Common myeloid progenitor, CD34-positive (primary cell): ENCODE measurements at regions of chr2 and their contacts with region 1.

Region 1: DNA sequence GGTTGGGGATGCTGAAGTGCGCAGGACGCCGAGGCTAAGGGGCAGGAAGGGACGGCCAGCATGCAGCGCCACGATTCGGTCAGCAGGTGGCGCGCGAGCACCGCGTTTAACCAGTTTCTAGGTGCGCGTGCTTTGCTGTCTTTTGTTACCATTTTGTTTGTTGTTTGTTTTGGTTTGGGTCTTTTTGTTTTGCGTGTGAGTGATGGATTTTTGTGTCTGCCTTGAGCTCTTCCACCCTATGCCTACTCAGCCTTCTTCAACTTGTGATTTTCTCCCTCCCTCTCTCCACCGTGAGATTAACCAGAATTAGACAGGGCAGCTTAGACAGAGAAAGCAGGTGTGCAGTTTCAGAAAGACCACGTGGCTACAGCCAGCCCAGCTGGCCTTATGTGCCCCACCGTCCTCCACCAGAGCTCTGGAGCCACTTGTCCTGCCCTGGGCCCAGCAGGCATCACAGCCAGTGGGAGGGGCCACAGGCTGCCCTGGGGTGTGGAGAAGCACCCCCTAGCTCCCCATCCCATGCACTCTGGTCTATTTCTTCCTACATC is 180.2 kb downstream of the RNF144A start:
- DNase-seq: peak; percentile 64 to 79 (median 74)
- H3K4me3 ChIP-seq: peak overlapping the region in 4 of 7 experiments; percentile 27 to 62 (median 47)
- H3K27ac ChIP-seq: no peak overlapping the region
- H3K4me1 ChIP-seq: peaks cover 0 to 6% (median 4%) of the 10 kb centered on the region in 4 experiments
- H3K27me3 ChIP-seq: no peaks in the 10 kb centered on the region

Region 2: GRCh38 chr2:7109533-7109885 is 12.1 kb after region 1 on chr2:
- CTCF ChIA-PET with region 1: interaction called, 27 read pairs
- POLR2A ChIA-PET with region 1: no interaction called
- DNase-seq: no peak
- H3K4me3 ChIP-seq: no peak overlapping the region
- H3K27ac ChIP-seq: no peak overlapping the region
- H3K4me1 ChIP-seq: peaks cover 0 to 7% (median 0%) of the 10 kb centered on the region in 4 experiments
- H3K27me3 ChIP-seq: no peaks in the 10 kb centered on the region

Region 3: GRCh38 chr2:7116511-7116910 is 19.1 kb after region 1 on chr2:
- CTCF ChIA-PET with region 1: interaction called, 23 read pairs
- POLR2A ChIA-PET with region 1: no interaction called
- DNase-seq: no peak
- H3K4me3 ChIP-seq: no peak overlapping the region
- H3K27ac ChIP-seq: no peak overlapping the region
- H3K4me1 ChIP-seq: no peaks in the 10 kb centered on the region
- H3K27me3 ChIP-seq: no peaks in the 10 kb centered on the region